Activated T-helper 1 cell treated with anti-CD3 and anti-CD28 coated beads, Interleukin-12 subunit alpha, Interleukin-12 subunit beta, Interleukin-2, Interleukin-4 antibody, amounts not matched to agents 30 ng/mL and 10 ng/mL and 1 ng/mL, durations not matched to agents 14 hours and 24 hours and 36 hours (primary cell): ENCODE measurements at regions of chr7 and their contacts with region 1.

Region 1: GRCh38 chr7:104983578-104984539 is 30.1 kb upstream of the KMT2E start:
- DNase-seq: peak; percentile 82
- H3K4me3 Mint-ChIP-seq: peak overlapping the region; percentile 99
- H3K27ac Mint-ChIP-seq: peak overlapping the region; percentile 100
- H3K4me1 Mint-ChIP-seq: peaks cover 76% of the 10 kb centered on the region
- H3K27me3 Mint-ChIP-seq: no peaks in the 10 kb centered on the region

Region 2: GRCh38 chr7:104943502-104944343 is 40.1 kb before region 1 on chr7:
- intact Hi-C with region 1: loop called (anchors 1 kb)
- DNase-seq: peak; percentile 70
- H3K4me3 Mint-ChIP-seq: peak overlapping the region; percentile 96
- H3K27ac Mint-ChIP-seq: peak overlapping the region; percentile 100
- H3K4me1 Mint-ChIP-seq: peaks cover 72% of the 10 kb centered on the region
- H3K27me3 Mint-ChIP-seq: peaks cover 2% of the 10 kb centered on the region

Region 3: GRCh38 chr7:104963991-104964385 is 19.9 kb before region 1 on chr7:
- intact Hi-C with region 1: no loop called
- DNase-seq: no peak
- H3K4me3 Mint-ChIP-seq: no peak overlapping the region
- H3K27ac Mint-ChIP-seq: peak overlapping the region; percentile 3
- H3K4me1 Mint-ChIP-seq: peaks cover 47% of the 10 kb centered on the region
- H3K27me3 Mint-ChIP-seq: no peaks in the 10 kb centered on the region

Region 4: DNA sequence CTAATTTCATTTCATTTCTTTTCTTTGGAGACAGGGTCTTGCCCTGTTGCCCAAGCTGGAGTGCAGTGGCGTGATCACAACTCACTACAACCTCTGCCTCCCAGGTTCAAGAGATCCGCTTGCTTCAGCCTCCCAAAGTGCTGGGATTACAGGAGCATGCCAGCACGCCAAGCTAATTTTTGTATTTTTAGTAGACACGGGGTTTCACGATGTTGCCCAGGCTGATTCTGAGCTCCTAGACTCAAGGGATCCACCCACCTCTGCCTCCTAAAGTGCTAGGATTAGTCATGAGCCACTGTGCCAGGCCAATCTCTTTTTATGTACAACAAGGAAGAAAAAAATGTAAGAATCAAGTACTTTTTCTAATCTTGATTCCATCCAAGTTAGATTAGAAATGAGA is 19.4 kb after region 1 on chr7:
- intact Hi-C with region 1: loop called (anchors 2 kb)
- DNase-seq: no peak
- H3K4me3 Mint-ChIP-seq: peak overlapping the region; percentile 58
- H3K27ac Mint-ChIP-seq: peak overlapping the region; percentile 50
- H3K4me1 Mint-ChIP-seq: peaks cover 85% of the 10 kb centered on the region
- H3K27me3 Mint-ChIP-seq: no peaks in the 10 kb centered on the region

Region 5: GRCh38 chr7:105098863-105099515 is 115.1 kb after region 1 on chr7:
- intact Hi-C with region 1: loop called (anchors 2 kb)
- DNase-seq: no peak
- H3K4me3 Mint-ChIP-seq: no peak overlapping the region
- H3K27ac Mint-ChIP-seq: peak overlapping the region; percentile 84
- H3K4me1 Mint-ChIP-seq: peaks cover 52% of the 10 kb centered on the region
- H3K27me3 Mint-ChIP-seq: no peaks in the 10 kb centered on the region

Region 6: DNA sequence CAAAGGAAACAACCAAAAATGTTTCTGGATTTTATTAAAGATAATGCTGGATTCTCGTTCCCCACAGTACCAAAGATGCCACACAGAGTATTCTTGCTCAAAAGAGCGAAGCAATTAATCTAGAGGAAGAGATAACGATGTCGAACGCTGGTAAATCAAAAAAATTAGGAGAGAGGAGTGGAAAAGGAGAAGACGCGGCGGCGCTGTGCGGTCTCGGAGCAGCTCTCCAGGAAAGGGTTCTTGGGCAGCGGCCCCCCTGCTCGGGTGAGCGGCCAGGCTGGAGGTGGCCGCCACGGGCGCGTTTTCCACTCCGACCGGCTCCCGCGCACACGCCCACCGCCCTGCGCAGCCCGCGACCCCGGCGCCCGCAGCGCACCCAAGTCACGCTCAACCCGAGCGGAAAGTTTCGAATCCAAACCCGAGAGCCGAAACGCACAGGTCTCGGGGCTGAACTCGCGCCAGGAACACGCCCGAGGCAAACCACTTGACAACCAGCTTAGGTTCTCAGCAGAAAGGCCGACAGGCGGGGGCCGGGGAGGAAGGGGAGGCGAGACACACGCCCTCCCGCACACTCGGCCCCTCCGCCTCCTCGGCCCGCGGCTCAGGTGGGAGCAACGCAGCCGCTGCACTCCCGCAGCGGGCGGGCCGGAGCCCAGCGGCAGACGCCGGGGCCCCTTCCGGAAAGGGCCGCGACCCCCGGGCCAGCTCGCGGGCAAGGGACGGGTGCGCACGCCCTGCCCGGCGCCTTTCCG is 403.9 kb after region 1 on chr7:
- intact Hi-C with region 1: loop called (anchors 5 kb)
- DNase-seq: peak; percentile 37
- H3K4me3 Mint-ChIP-seq: peak overlapping the region; percentile 95
- H3K27ac Mint-ChIP-seq: peak overlapping the region; percentile 63
- H3K4me1 Mint-ChIP-seq: peaks cover 29% of the 10 kb centered on the region
- H3K27me3 Mint-ChIP-seq: peaks cover 4% of the 10 kb centered on the region

Region 7: DNA sequence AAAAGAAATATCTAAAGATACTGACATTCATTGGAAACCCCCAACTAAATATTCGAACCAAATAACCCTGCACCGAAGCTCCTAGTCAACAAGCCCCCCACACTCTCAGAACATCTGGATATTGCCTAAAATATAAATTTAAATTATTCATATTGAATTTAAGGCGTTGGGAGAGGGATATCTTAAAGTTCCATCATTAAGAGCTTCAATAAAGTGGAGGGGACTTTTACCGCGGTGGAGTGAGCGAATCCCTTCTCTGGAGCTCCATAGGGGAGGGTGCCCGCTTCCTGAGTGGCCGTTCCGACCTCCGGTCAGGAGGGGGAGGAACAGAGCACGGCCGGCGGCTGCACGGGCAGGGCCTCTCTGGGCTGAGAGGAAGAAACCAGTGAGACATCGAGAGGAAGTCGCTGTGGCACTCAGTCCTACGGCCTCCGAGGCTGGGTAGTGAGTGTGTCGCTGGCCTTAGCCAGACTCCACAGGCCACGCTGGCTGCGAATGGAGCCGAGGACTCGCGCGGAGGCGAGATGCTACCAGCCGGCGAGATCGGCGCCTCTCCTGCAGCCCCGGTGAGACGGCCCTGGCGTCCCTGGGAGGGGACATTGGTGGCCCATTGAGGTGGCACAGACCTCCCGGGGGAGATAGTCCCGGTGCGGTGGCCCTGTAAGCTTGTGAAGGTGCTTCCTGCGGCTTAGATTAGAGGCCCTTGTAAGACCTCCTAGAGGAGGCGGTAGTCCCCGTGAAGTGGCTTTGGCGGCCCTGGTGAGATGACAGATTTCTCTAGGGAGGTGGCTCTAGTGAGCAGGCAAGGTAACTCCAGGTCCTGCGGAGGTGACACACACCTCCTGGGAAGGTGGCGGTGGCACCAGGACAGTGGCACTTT is 548.2 kb after region 1 on chr7 and contains the start of gene RINT1:
- intact Hi-C with region 1: loop called (anchors 1 kb)
- DNase-seq: peak; percentile 85
- H3K4me3 Mint-ChIP-seq: peak within 1 kb of the TSS; percentile 93
- H3K27ac Mint-ChIP-seq: peak within 1 kb of the TSS; percentile 95
- H3K4me1 Mint-ChIP-seq: peaks cover 21% of the 10 kb centered on the region
- H3K27me3 Mint-ChIP-seq: peaks cover 1% of the 10 kb centered on the region
- total RNA-seq, gene RINT1: 21.9 and 32.5 TPM in 2 replicates